ENCODE measurements at regions of chr9 and their contacts with region 1.

Region 1: DNA sequence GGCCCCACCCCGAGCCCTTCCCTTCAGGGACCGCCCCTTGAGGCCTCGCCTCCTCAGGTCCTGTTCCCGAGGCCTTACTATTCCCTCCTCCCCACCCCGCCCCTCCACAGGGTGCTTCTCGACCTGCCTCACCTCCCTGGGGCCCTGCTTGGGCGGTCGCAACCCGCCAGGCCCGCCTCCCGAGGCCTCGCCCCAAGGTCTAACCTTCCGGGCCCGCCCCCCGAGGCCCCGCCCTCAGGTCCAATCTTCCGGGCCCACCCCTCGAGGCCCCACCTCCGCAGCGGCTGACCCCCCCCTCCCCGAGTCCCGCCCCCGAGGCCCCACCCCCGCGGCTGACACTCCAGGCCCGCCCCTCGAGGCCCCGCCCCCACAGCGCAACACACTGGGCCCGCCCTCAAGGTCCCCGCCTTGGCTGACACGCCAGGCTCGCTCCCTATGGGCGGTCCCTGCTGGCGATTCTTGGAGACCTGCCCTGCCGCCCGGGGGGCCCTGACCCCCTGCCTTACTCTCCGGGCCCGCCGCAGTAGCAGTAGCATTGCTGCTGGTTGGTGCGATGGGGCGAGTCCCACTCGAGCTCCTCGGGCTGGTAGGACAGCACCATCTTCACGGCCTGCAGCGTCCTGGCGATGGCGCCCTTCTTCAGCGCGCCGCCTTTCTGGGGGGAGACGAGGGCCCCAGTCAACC is 8.2 kb downstream of the PHF19 start:
- DNase-seq: peak; percentile 94 to 98 (median 96)
- H3K4me3 ChIP-seq: peak overlapping the region in 1 of 2 donors; percentile 50
- H3K4me3 Mint-ChIP-seq: peak overlapping the region; percentile 91 to 96 (median 94)
- H3K27ac ChIP-seq: peak overlapping the region; percentile 79
- H3K27ac Mint-ChIP-seq: peak overlapping the region; percentile 89 to 99 (median 98)
- H3K4me1 ChIP-seq: peaks cover 35% of the 10 kb centered on the region
- H3K4me1 Mint-ChIP-seq: peaks cover 25 to 44% (median 29%) of the 10 kb centered on the region in 4 donors
- H3K27me3 ChIP-seq: no peaks in the 10 kb centered on the region
- H3K27me3 Mint-ChIP-seq: no peaks in the 10 kb centered on the region

Region 2: GRCh38 chr9:120842690-120843499 is 25.9 kb before region 1 on chr9 and contains the start of gene PSMD5:
- CTCF ChIA-PET with region 1: interaction called, 16 read pairs
- POLR2A ChIA-PET with region 1: interaction called, 89 read pairs
- intact Hi-C with region 1: loop called (anchors 1 kb)
- DNase-seq: peak; percentile 93 to 99 (median 99)
- H3K4me3 ChIP-seq: peak within 1 kb of the TSS; percentile 78 to 84
- H3K4me3 Mint-ChIP-seq: peak within 1 kb of the TSS; percentile 92 to 98 (median 96)
- H3K27ac ChIP-seq: peak within 1 kb of the TSS; percentile 98
- H3K27ac Mint-ChIP-seq: peak within 1 kb of the TSS; percentile 96 to 98 (median 98)
- H3K4me1 ChIP-seq: peaks cover 75% of the 10 kb centered on the region
- H3K4me1 Mint-ChIP-seq: peaks cover 62 to 84% (median 73%) of the 10 kb centered on the region in 4 donors
- H3K27me3 ChIP-seq: no peaks in the 10 kb centered on the region
- H3K27me3 Mint-ChIP-seq: no peaks in the 10 kb centered on the region
- total RNA-seq, gene PSMD5: 46.4 to 59.0 TPM

Region 3: GRCh38 chr9:120886490-120886967 is 17.7 kb after region 1 on chr9:
- CTCF ChIA-PET with region 1: interaction called, 32 read pairs
- POLR2A ChIA-PET with region 1: interaction called, 5,577 read pairs
- intact Hi-C with region 1: loop called (anchors 1 kb)
- DNase-seq: no peak
- H3K4me3 ChIP-seq: no peak overlapping the region
- H3K4me3 Mint-ChIP-seq: peak overlapping the region in 1 of 8 donors; percentile 15
- H3K27ac ChIP-seq: no peak overlapping the region
- H3K27ac Mint-ChIP-seq: peak overlapping the region in 6 of 7 donors; percentile 1 to 89 (median 46)
- H3K4me1 ChIP-seq: peaks cover 67% of the 10 kb centered on the region
- H3K4me1 Mint-ChIP-seq: peaks cover 37 to 77% (median 58%) of the 10 kb centered on the region in 4 donors
- H3K27me3 ChIP-seq: no peaks in the 10 kb centered on the region
- H3K27me3 Mint-ChIP-seq: no peaks in the 10 kb centered on the region

Region 4: DNA sequence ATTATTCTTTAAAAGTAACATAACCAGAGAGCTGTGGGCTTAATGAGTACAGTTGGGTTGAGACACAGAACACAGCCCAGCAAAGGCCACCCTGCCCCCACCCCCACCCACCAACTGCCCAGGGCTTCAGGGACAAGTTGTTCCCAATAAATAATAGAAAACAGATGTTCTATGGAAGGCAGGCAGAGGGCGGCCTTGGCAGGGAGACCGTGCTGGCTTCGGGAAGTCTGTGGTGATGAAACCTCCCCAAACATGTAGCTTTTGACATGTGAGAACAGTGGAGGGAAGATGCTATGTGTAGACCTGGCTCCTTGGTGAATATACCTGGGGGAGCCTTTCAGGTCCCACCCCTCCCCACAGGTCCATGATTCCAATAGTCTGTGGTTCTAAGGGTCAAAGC is 47.8 kb after region 1 on chr9:
- CTCF ChIA-PET with region 1: interaction called, 18 read pairs
- POLR2A ChIA-PET with region 1: interaction called, 5,577 read pairs
- intact Hi-C with region 1: no loop called
- DNase-seq: no peak
- H3K4me3 ChIP-seq: no peak overlapping the region
- H3K4me3 Mint-ChIP-seq: peak overlapping the region; percentile 2 to 84 (median 69)
- H3K27ac ChIP-seq: peak overlapping the region; percentile 50
- H3K27ac Mint-ChIP-seq: peak overlapping the region; percentile 78 to 96 (median 89)
- H3K4me1 ChIP-seq: peaks cover 92% of the 10 kb centered on the region
- H3K4me1 Mint-ChIP-seq: peaks cover 59 to 98% (median 79%) of the 10 kb centered on the region in 4 donors
- H3K27me3 ChIP-seq: no peaks in the 10 kb centered on the region
- H3K27me3 Mint-ChIP-seq: no peaks in the 10 kb centered on the region

Region 5: GRCh38 chr9:120936011-120936763 is 67.4 kb after region 1 on chr9:
- CTCF ChIA-PET with region 1: interaction called, 254 read pairs
- POLR2A ChIA-PET with region 1: interaction called, 5,577 read pairs
- intact Hi-C with region 1: loop called (anchors 1 kb)
- DNase-seq: peak; percentile 78 to 85 (median 80)
- H3K4me3 ChIP-seq: peak overlapping the region in 1 of 2 donors; percentile 36
- H3K4me3 Mint-ChIP-seq: peak overlapping the region; percentile 24 to 76 (median 68)
- H3K27ac ChIP-seq: peak overlapping the region; percentile 66
- H3K27ac Mint-ChIP-seq: peak overlapping the region; percentile 89 to 97 (median 96)
- H3K4me1 ChIP-seq: peaks cover 61% of the 10 kb centered on the region
- H3K4me1 Mint-ChIP-seq: peaks cover 43 to 66% (median 54%) of the 10 kb centered on the region in 4 donors
- H3K27me3 ChIP-seq: no peaks in the 10 kb centered on the region
- H3K27me3 Mint-ChIP-seq: no peaks in the 10 kb centered on the region

Region 6: GRCh38 chr9:121059998-121060636 is 191.3 kb after region 1 on chr9:
- CTCF ChIA-PET with region 1: interaction called, 11 read pairs
- POLR2A ChIA-PET with region 1: interaction called, 4 read pairs
- intact Hi-C with region 1: no loop called
- DNase-seq: peak in 4 of 5 donors; percentile 48 to 57 (median 50)
- H3K4me3 ChIP-seq: no peak overlapping the region
- H3K4me3 Mint-ChIP-seq: no peak overlapping the region
- H3K27ac ChIP-seq: no peak overlapping the region
- H3K27ac Mint-ChIP-seq: peak overlapping the region in 1 of 7 donors; percentile 20
- H3K4me1 ChIP-seq: peaks cover 27% of the 10 kb centered on the region
- H3K4me1 Mint-ChIP-seq: peaks cover 16 to 18% (median 17%) of the 10 kb centered on the region in 4 donors
- H3K27me3 ChIP-seq: no peaks in the 10 kb centered on the region
- H3K27me3 Mint-ChIP-seq: no peaks in the 10 kb centered on the region